Breast epithelium (tissue), 4 donors: ENCODE measurements at regions of chr3 and their contacts with region 1.

Region 1: GRCh38 chr3:183044547-183045229 is 54.6 kb downstream of the MCCC1 start:
- DNase-seq: no peak
- H3K4me3 ChIP-seq: no peak overlapping the region
- H3K27ac ChIP-seq: no peak overlapping the region
- H3K4me1 ChIP-seq: no peaks in the 10 kb centered on the region
- H3K27me3 ChIP-seq: no peaks in the 10 kb centered on the region
- CTCF ChIP-seq: no peak
- POLR2A ChIP-seq: no peak

Region 2: GRCh38 chr3:182989407-182989965 is 55.2 kb before region 1 on chr3:
- intact Hi-C with region 1: loop called (anchors 2 kb)
- DNase-seq: no peak
- H3K4me3 ChIP-seq: no peak overlapping the region
- H3K27ac ChIP-seq: no peak overlapping the region
- H3K4me1 ChIP-seq: no peaks in the 10 kb centered on the region
- H3K27me3 ChIP-seq: no peaks in the 10 kb centered on the region
- CTCF ChIP-seq: no peak
- POLR2A ChIP-seq: no peak

Region 3: DNA sequence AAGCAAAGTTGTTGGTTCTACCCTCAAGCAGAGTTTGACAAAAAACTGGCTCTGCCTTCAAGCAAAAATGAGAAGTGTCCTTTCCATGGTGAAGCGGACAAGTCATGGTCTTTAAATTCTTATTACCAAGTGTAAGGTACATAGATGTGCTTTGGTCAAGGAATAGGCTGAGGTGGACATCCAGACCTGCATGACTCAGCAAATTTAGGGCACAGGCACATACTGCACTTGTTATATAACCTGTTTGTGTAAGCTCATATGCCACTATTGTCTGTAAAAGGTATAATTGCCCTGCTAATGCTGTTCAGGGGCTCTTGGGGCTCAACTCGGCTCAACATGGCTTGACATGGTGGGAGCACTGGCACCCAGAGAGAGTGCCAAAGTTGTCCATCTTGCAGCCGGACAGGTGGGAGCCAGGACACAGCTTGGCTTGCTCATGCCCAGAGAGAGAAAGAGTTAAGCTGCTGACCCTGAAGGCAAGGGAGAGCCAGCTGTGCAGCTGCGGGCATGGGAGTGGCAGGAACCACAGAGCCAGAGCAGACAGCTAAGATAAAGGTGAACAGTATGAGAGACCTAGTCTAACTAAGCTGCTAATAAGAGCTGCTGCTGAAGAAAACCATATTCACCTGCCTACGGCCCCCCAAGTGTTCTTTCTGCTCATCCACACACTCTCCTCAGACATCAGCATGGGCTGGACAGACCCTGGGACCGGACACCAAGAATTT is 36.9 kb after region 1 on chr3:
- intact Hi-C with region 1: loop called (anchors 2 kb)
- DNase-seq: no peak
- H3K4me3 ChIP-seq: no peak overlapping the region
- H3K27ac ChIP-seq: no peak overlapping the region
- H3K4me1 ChIP-seq: no peaks in the 10 kb centered on the region
- H3K27me3 ChIP-seq: no peaks in the 10 kb centered on the region
- CTCF ChIP-seq: no peak
- POLR2A ChIP-seq: no peak